A549 (cell line): ENCODE measurements at regions of chr4 and their contacts with region 1.

Region 1: GRCh38 chr4:185096032-185096653 is 46.9 kb upstream of the SLC25A4 start:
- DNase-seq: peak; percentile 11 to 26
- ATAC-seq: no peak
- H3K4me3 ChIP-seq: no peak overlapping the region
- H3K27ac ChIP-seq: no peak overlapping the region
- H3K4me1 ChIP-seq: no peaks in the 10 kb centered on the region
- CTCF ChIP-seq: peak; percentile 70
- EP300 ChIP-seq: no peak
- POLR2A ChIP-seq: no peak
- RAD21 ChIP-seq: peak; percentile 61 to 64; a peak in 4 of 5 replicates

Region 2: DNA sequence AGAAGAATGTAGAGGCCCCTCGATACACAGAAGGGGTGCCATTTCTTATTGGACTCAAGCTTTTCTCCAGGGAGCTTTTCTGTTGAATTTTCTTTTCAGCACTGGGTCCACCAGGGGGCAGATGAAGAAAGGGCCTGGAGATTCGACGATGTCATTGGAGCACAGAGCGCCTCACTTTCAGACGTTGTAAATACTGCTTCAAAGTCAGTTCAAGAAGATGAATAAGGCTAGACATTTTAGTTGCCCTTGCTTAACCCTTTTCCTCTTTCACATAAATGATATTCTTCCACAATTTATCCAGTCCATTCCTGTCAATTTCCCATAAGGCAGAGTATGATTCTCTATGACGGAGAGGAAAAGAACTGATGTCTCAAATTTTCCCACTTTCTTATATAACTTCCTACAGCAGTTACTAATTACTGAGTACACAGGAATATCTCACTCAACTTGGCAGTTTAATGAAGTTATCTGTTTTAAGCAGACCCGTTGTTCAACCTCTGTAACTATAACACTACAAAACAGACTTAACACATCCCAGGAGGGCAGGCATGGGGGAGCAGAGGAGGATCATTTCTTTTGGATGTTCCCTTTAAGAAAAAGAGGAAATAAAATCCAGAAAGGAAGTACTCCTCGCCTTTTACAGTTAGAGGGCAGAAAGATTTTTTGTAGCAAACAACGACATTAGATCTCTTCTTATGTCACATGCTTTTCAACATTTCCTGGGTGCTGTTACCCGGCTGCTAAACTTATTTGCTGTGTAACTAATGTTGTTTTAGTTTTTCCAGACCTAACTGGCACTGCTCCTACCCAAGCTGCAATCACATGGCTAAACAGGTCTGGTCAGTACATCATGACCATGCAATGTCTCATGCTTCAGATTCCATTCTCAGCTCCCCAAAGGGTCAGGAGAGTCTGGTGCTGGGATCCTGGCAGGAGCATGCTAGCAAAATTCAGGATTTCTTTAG is 350.0 kb before region 1 on chr4:
- CTCF ChIA-PET with region 1: interaction called, 12 read pairs
- POLR2A ChIA-PET with region 1: no interaction called
- DNase-seq: peak; percentile 59 to 73
- ATAC-seq: peak; percentile 84 to 86; a peak in 5 of 6 replicates
- H3K4me3 ChIP-seq: no peak overlapping the region
- H3K27ac ChIP-seq: peak overlapping the region in 1 of 2 experiments; percentile 53; a peak in 1 of 6 replicates
- H3K4me1 ChIP-seq: peaks cover 5% of the 10 kb centered on the region; the same call in 2 of the 3 replicates
- CTCF ChIP-seq: peak; percentile 73
- EP300 ChIP-seq: no peak
- POLR2A ChIP-seq: no peak
- RAD21 ChIP-seq: peak; percentile 78 to 83

Region 3: DNA sequence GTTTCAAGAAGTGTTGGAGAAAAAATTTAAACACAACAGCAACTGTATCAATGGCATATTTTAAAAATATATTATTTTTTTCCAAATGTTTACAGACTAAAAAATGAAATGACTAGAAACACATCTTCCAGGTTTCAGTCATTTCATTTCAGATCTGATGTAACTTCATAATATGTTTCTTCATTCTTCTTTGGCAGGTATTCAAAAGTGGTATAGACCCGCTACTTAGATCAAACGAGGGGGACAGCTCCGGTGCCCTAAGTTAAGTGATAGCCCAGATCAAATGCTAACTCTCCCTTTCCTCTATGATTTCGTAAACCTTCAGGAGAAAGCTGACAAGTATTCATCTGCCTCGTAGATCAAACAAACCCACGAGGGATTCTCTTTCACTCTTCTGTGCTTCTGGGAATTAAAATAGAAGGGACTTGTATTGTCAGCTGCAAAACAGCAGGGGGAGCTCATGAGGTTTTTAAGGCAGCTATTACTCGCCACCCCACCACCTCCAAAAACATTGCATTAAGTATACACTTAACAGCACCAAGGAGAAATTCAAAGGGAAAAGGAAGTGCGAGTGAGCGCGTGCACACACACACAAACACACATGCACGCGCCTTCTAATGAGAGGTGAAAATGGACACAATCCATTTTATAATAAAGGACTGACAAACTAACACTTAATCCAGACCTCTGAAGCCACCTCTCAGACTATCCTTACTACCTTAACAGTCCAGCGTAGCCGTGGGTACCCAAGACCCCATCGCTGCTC is 56.5 kb before region 1 on chr4:
- CTCF ChIA-PET with region 1: interaction called, 34 read pairs
- POLR2A ChIA-PET with region 1: no interaction called
- DNase-seq: peak; percentile 53 to 66
- ATAC-seq: peak; percentile 86 to 93
- H3K4me3 ChIP-seq: peak overlapping the region; percentile 33
- H3K27ac ChIP-seq: peak overlapping the region; percentile 52 to 82; a peak in 5 of 6 replicates
- H3K4me1 ChIP-seq: no peaks in the 10 kb centered on the region; the same call in 2 of the 3 replicates
- CTCF ChIP-seq: peak; percentile 73
- EP300 ChIP-seq: no peak
- POLR2A ChIP-seq: no peak
- RAD21 ChIP-seq: peak; percentile 66 to 67

Region 4: GRCh38 chr4:185086053-185086452 is 10.1 kb before region 1 on chr4:
- CTCF ChIA-PET with region 1: interaction called, 12 read pairs
- POLR2A ChIA-PET with region 1: no interaction called
- DNase-seq: no peak
- ATAC-seq: no peak
- H3K4me3 ChIP-seq: no peak overlapping the region
- H3K27ac ChIP-seq: no peak overlapping the region
- H3K4me1 ChIP-seq: no peaks in the 10 kb centered on the region
- CTCF ChIP-seq: no peak
- EP300 ChIP-seq: no peak
- POLR2A ChIP-seq: no peak
- RAD21 ChIP-seq: no peak